Activated CD4-positive, alpha-beta memory T cell treated with anti-CD3 and anti-CD28 coated beads for 36 hours (primary cell): ENCODE measurements at regions of chr2 and their contacts with region 1.

Region 1: GRCh38 chr2:171416009-171416926 is 17.5 kb downstream of the METTL8 start:
- DNase-seq: peak; percentile 91
- H3K4me3 Mint-ChIP-seq: no peak overlapping the region
- H3K27ac Mint-ChIP-seq: peak overlapping the region; percentile 88
- H3K4me1 Mint-ChIP-seq: peaks cover 33% of the 10 kb centered on the region
- H3K27me3 Mint-ChIP-seq: no peaks in the 10 kb centered on the region

Region 2: DNA sequence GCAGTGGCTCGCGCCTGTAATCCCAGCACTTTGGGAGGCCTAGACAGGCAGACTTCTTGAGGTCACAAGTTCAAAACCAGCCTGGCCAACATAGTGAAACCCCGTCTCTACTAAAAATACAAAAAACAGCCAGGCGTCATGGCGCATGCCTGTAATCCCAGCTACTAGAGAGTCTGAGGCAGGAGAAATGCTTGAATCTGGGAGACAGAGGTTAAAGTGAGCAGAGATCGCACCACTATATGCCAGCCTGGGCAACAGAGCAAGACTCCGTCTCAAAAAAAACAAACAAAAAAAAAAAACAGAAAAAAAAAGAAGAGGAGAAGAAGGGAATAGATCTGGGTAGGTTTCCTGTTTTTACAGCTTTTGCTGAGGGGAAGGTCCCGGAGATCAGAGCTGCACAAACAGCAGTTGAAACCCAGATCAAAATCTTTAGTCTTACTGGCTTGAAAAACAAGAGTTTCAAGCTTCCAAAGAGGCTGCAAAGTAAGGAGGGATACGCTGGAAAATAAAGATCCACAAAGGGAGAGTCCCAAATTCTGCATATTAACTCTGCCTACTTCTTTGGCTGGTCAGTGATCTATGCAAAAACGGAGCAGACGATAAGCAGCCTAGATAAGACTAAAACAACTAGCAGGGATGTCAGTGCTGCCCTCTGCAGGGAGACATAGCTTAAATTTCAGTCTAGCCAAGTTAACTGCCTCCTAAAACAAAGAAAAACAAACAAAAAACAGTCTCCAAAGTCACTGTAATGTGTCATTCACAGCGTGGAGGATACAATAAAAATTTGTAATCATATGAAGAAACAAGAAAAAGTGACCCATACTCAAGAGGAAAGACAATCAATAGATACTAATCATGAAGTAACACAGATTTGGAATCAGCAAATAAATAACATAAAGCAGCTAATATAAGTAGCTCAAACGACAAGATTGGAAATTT is 329.6 kb before region 1 on chr2:
- CTCF ChIA-PET with region 1: interaction called, 20 read pairs
- POLR2A ChIA-PET with region 1: no interaction called
- intact Hi-C with region 1: loop called (anchors 2 kb)
- DNase-seq: peak; percentile 66
- H3K4me3 Mint-ChIP-seq: peak overlapping the region; percentile 64
- H3K27ac Mint-ChIP-seq: peak overlapping the region; percentile 43
- H3K4me1 Mint-ChIP-seq: peaks cover 58% of the 10 kb centered on the region
- H3K27me3 Mint-ChIP-seq: no peaks in the 10 kb centered on the region

Region 3: DNA sequence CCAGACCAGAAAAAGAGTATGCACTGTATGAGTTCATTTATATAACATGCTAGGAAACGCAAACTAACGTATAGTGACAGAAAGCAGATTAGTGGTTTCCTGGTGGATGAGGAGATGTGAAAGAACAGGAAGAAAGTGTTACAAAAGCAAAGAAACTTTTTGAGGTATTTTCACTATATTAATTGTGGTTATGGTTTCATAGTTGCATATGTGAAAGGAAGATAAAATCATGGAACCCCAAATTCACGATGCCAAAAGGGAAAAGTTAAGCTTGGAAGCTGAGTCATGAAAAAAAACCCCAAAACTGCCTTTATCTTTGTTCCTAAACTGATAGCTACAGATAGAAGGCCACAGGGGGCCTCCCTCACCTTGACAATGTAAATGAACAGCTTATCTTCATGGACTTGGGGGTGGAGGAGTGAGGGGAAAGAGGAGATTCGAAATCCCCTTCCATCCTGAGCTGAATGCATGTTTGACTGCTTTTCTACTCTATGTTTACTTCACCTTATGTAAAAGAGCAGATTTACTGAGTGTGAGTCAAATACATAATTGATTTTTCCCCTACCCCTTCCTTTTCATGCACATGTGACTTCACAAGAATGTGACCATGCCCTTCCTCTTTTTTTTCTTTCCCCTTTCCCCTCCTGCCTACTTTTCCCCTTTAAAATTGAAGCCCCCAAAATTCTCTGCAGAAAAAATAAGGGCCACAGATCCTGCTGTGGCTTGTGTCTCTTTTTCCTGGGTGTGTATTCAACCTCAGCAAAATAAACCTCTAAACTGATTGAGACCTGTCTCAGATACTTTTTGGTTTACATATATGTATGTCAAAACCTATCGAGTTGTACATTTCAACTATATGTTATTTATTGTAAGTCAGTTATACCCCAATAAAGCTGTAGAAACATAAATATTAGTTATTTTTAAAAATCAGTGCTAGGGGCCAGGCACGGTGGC is 155.5 kb before region 1 on chr2:
- CTCF ChIA-PET with region 1: interaction called, 7 read pairs
- POLR2A ChIA-PET with region 1: interaction called, 3 read pairs
- intact Hi-C with region 1: loop called (anchors 1 kb)
- DNase-seq: peak; percentile 50
- H3K4me3 Mint-ChIP-seq: no peak overlapping the region
- H3K27ac Mint-ChIP-seq: peak overlapping the region; percentile 19
- H3K4me1 Mint-ChIP-seq: peaks cover 31% of the 10 kb centered on the region
- H3K27me3 Mint-ChIP-seq: no peaks in the 10 kb centered on the region

Region 4: DNA sequence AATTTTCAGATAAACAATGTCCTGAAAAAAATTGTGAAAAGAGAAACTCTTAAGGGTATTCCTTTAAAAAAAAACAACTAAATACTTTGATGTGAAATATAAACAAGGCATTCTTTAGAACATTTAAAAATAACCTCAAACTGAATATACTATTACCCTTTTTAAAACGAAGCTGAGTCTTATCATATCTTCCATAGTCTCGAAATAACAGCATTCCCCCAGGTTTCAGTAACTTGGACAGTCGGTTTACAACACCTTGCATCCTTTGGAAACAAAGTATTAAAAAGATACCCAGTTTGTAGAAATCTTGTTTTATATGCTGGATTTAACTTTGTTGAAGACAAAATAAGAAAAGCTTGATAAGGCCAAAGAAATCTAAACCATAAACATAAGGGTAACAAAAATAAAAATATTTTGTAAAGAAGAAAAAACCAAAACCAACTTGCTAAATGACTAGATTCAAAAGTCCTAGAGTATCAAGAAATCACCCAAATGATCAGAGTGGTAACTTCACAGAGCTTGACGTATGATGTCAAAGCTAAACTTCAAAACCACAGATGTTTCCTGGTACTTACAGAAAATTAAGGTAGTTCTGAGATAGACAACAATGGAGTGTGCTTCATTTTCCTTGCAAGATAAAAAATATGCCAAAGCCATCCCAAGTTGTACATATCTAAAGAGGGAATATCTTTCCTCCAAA is 90.2 kb before region 1 on chr2:
- CTCF ChIA-PET with region 1: interaction called, 12 read pairs
- POLR2A ChIA-PET with region 1: interaction called, 3 read pairs
- intact Hi-C with region 1: no loop called
- DNase-seq: no peak
- H3K4me3 Mint-ChIP-seq: peak overlapping the region; percentile 50
- H3K27ac Mint-ChIP-seq: peak overlapping the region; percentile 66
- H3K4me1 Mint-ChIP-seq: peaks cover 50% of the 10 kb centered on the region
- H3K27me3 Mint-ChIP-seq: no peaks in the 10 kb centered on the region

Region 5: DNA sequence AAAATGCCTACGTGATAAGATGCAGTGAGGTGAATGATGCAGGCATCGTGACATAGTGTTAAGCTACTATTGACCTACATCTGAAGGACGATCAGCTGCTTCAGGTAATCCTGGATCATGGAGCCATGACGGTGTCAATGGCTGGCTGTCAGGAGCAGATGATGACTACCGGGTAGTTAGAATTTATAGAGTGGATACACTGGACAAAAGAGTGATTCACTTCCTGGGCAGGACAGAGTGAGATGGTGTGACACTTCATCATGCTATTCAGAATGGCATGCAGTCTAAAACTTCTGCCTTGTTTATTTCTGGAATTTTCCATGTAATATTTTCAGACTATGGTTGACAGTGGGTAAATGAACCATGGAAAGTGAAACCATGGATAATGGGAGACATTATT is 12.0 kb before region 1 on chr2:
- CTCF ChIA-PET with region 1: interaction called, 3 read pairs
- POLR2A ChIA-PET with region 1: no interaction called
- intact Hi-C with region 1: loop called (anchors 1 kb)
- DNase-seq: no peak
- H3K4me3 Mint-ChIP-seq: no peak overlapping the region
- H3K27ac Mint-ChIP-seq: no peak overlapping the region
- H3K4me1 Mint-ChIP-seq: peaks cover 46% of the 10 kb centered on the region
- H3K27me3 Mint-ChIP-seq: no peaks in the 10 kb centered on the region